Body of pancreas (tissue), 4 donors: ENCODE measurements at regions of chr2 and their contacts with region 1.

Region 1: GRCh38 chr2:88671786-88672427 is 19.6 kb upstream of the RPIA start:
- DNase-seq: peak in 2 of 4 donors; percentile 10 to 21
- ATAC-seq: peak; percentile 41
- H3K4me3 ChIP-seq: no peak overlapping the region
- H3K27ac ChIP-seq: no peak overlapping the region
- H3K4me1 ChIP-seq: peaks cover 32% of the 10 kb centered on the region
- H3K27me3 ChIP-seq: no peaks in the 10 kb centered on the region
- CTCF ChIP-seq: peak; percentile 66 to 96 (median 81)
- POLR2A ChIP-seq: no peak

Region 2: DNA sequence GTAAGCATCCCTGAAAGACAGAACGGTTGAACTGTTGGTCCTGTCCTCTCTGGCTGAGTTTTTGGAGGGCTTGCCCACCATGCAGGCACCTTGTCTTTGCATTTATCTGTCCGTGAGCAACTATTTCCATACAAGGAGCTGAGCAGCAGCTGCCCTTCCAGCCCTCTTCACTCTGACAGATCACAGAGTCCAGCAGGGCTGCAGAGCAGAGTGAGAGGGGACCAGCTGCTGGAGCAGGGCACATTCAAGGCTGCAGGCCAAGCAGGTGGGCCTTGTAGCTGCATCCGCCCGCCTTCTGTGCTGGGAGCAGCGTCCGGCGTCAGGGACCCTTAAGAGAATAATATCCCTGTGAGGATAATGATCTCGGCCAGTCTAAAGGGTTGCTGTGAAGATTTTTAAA is 594.8 kb before region 1 on chr2:
- intact Hi-C with region 1: no loop called
- DNase-seq: no peak
- ATAC-seq: no peak
- H3K4me3 ChIP-seq: no peak overlapping the region
- H3K27ac ChIP-seq: no peak overlapping the region
- H3K4me1 ChIP-seq: peaks cover 6% of the 10 kb centered on the region
- H3K27me3 ChIP-seq: no peaks in the 10 kb centered on the region
- CTCF ChIP-seq: no peak
- POLR2A ChIP-seq: no peak

Region 3: GRCh38 chr2:88429929-88430328 is 242.0 kb before region 1 on chr2:
- intact Hi-C with region 1: no loop called
- DNase-seq: no peak
- ATAC-seq: no peak
- H3K4me3 ChIP-seq: no peak overlapping the region
- H3K27ac ChIP-seq: no peak overlapping the region
- H3K4me1 ChIP-seq: no peaks in the 10 kb centered on the region
- H3K27me3 ChIP-seq: no peaks in the 10 kb centered on the region
- CTCF ChIP-seq: no peak
- POLR2A ChIP-seq: no peak

Region 4: GRCh38 chr2:88489200-88489599 is 182.7 kb before region 1 on chr2:
- intact Hi-C with region 1: no loop called
- DNase-seq: no peak
- ATAC-seq: no peak
- H3K4me3 ChIP-seq: no peak overlapping the region
- H3K27ac ChIP-seq: no peak overlapping the region
- H3K4me1 ChIP-seq: peaks cover under 1% of the 10 kb centered on the region
- H3K27me3 ChIP-seq: no peaks in the 10 kb centered on the region
- CTCF ChIP-seq: no peak
- POLR2A ChIP-seq: no peak

Region 5: GRCh38 chr2:88590998-88591613 is 80.8 kb before region 1 on chr2:
- intact Hi-C with region 1: loop called (anchors 5 kb)
- DNase-seq: peak; percentile 51 to 67 (median 54)
- ATAC-seq: peak; percentile 93
- H3K4me3 ChIP-seq: no peak overlapping the region
- H3K27ac ChIP-seq: peak overlapping the region in 3 of 4 donors; percentile 39 to 47 (median 42)
- H3K4me1 ChIP-seq: peaks cover 13% of the 10 kb centered on the region
- H3K27me3 ChIP-seq: no peaks in the 10 kb centered on the region
- CTCF ChIP-seq: peak; percentile 29 to 86 (median 74)
- POLR2A ChIP-seq: no peak